Activated B cell treated with CpG ODN at 0.5 μM for 24 hours (primary cell): ENCODE measurements at regions of chr17 and their contacts with region 1.

Region 1: DNA sequence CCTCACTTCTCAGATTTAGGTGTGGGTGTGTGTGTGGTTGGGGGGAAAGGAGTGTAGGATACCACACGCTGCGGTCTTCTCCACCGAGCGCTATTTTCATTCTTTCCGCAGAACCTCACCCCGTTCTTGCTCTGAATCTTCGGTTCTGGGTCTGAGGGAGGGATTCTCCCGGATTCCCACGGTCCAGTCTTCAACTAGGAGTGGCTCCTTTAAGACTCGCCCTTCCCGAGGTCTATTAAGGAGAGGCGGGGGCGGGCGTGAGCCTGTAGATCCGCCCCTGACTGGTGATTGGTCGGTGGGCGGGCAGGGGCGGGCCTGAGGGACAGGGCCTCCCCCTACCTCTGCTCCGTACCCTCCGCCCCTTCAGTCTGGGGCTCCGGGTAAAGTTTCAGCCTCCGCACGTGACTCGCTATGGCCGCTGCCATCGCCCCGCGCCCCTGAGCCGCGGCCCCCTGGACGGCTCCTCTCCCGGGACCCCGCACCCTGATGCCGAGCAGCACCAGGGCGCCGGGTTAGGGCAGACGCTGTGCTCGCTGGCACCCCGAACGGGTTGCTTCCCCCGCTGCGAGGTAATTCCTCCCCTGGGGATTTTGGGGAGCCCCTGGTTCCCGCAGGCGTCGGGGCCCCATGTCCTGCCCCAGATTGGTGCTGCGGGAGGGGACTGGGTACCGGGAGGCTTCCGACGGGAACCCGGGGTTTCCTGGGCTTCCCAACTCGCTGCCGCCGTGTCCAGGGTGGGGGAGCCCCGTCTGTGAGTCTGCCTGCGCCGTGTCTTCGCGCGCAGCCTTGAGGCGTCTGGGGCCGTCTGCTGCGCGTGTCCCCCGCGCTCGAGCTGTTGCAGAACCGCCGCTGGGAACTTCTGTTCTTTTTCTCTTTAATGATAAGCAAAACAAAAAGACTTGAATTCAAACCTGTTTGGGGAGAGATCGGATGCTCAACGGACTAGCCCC is 9.2 kb downstream of the RARA start:
- DNase-seq: peak; percentile 88
- ATAC-seq: peak; percentile 65
- H3K4me3 Mint-ChIP-seq: peak overlapping the region; percentile 93
- H3K27ac Mint-ChIP-seq: peak overlapping the region; percentile 98
- H3K4me1 Mint-ChIP-seq: peaks cover 85% of the 10 kb centered on the region
- H3K27me3 Mint-ChIP-seq: no peaks in the 10 kb centered on the region
- CTCF ChIP-seq: no peak

Region 2: GRCh38 chr17:40303009-40303657 is 15.0 kb before region 1 on chr17:
- CTCF ChIA-PET with region 1: interaction called, 11 read pairs
- POLR2A ChIA-PET with region 1: interaction called, 9 read pairs
- intact Hi-C with region 1: loop called (anchors 1 kb)
- DNase-seq: no peak
- ATAC-seq: peak; percentile 83
- H3K4me3 Mint-ChIP-seq: no peak overlapping the region
- H3K27ac Mint-ChIP-seq: no peak overlapping the region
- H3K4me1 Mint-ChIP-seq: peaks cover 7% of the 10 kb centered on the region
- H3K27me3 Mint-ChIP-seq: no peaks in the 10 kb centered on the region
- CTCF ChIP-seq: no peak

Region 3: GRCh38 chr17:40340880-40341807 is 23.0 kb after region 1 on chr17:
- CTCF ChIA-PET with region 1: interaction called, 466 read pairs
- POLR2A ChIA-PET with region 1: interaction called, 81 read pairs
- intact Hi-C with region 1: loop called (anchors 1 kb)
- DNase-seq: peak; percentile 82
- ATAC-seq: peak; percentile 83
- H3K4me3 Mint-ChIP-seq: peak overlapping the region; percentile 85
- H3K27ac Mint-ChIP-seq: peak overlapping the region; percentile 81
- H3K4me1 Mint-ChIP-seq: peaks cover 77% of the 10 kb centered on the region
- H3K27me3 Mint-ChIP-seq: no peaks in the 10 kb centered on the region
- CTCF ChIP-seq: no peak

Region 4: GRCh38 chr17:40598663-40599467 is 280.7 kb after region 1 on chr17:
- CTCF ChIA-PET with region 1: no interaction called
- POLR2A ChIA-PET with region 1: interaction called, 4 read pairs
- intact Hi-C with region 1: loop called (anchors 1 kb)
- DNase-seq: peak; percentile 70
- ATAC-seq: peak; percentile 75
- H3K4me3 Mint-ChIP-seq: peak overlapping the region; percentile 59
- H3K27ac Mint-ChIP-seq: peak overlapping the region; percentile 92
- H3K4me1 Mint-ChIP-seq: peaks cover 95% of the 10 kb centered on the region
- H3K27me3 Mint-ChIP-seq: no peaks in the 10 kb centered on the region
- CTCF ChIP-seq: no peak